Posterior vena cava (tissue), 2 donors: ENCODE measurements at regions of chr2 and their contacts with region 1.

Region 1: GRCh38 chr2:43226558-43226954 is at the start of gene ZFP36L2:
- DNase-seq: peak; percentile 99
- total RNA-seq, gene ZFP36L2: 123 to 148 TPM

Region 2: GRCh38 chr2:41940770-41941113 is 1285.8 kb before region 1 on chr2:
- intact Hi-C with region 1: loop called in 1 of 2 experiments (anchors 5 kb)
- DNase-seq: no peak

Region 3: GRCh38 chr2:42859006-42859552 is 367.5 kb before region 1 on chr2:
- intact Hi-C with region 1: loop called in 1 of 2 experiments (anchors 5 kb)
- DNase-seq: no peak

Region 4: DNA sequence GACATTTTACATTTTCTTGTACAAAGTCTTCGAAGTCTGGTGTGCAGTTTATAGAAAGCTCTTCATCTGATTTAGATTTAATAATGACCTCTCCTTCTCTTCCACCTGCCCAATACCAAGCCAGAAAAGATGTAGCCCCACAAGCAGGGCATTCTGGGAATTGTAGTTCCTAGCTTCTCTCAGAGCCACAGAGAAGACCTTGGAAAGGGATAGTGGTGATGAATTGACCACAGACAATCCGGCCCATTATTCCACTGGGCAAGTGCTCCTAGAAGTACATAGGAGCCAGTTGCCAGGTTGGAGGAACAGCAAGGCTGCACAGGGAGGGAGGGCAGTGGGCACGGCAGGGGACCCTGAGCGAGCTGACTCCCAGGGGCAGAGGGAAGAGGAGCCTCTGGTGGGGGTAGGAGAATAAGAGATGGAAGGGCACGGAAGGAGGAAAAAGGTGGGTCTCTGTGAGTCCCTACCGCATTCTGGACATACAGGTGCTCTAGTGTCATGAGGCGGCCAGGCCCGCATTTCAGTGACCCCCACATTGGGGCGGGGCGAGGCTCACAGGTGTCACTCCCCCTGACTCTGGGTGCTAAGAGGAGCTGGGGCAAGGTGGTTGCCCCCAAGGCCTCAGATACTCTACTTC is 281.7 kb before region 1 on chr2:
- intact Hi-C with region 1: loop called in 1 of 2 experiments (anchors 2 kb)
- DNase-seq: no peak

Region 5: GRCh38 chr2:42974721-42975717 is 251.5 kb before region 1 on chr2:
- intact Hi-C with region 1: loop called (anchors 5 to 10 kb)
- DNase-seq: peak; percentile 90

Region 6: DNA sequence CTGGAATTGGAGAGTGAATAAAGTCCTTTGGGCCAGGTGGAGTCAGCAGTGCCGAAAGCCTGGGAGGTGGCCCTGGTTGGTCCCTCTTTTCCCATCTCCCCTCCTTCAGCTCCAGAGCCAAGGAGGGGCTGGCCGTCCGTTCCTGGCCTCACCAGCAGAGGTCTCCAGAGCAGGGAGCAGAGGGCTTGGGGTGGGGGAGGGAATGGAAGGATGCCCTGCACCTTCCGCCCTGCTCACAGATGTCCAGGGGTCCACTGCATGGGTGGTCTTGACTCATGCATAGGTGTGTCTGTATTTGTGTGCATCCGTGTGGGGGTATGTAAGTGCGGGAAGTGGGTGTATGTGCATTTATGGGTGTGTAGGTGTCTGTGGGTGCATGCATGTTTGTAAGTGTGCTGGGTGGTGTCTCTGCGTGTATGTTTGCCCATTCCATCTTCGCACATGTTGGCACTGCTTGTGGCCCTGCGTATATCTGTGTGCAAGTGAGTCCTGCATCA is 202.0 kb before region 1 on chr2:
- intact Hi-C with region 1: loop called (anchors 5 to 10 kb)
- DNase-seq: peak; percentile 89

Region 7: GRCh38 chr2:43484323-43484930 is 257.9 kb after region 1 on chr2:
- intact Hi-C with region 1: loop called in 1 of 2 experiments (anchors 5 kb)
- DNase-seq: no peak